Mammary epithelial cell (primary cell): ENCODE measurements at regions of chr4 and their contacts with region 1.

Region 1: GRCh38 chr4:5719350-5720055 is 8.5 kb downstream of the EVC start:
- DNase-seq: no peak
- H3K4me3 ChIP-seq: no peak overlapping the region
- H3K27ac ChIP-seq: no peak overlapping the region
- H3K4me1 ChIP-seq: no peaks in the 10 kb centered on the region
- H3K27me3 ChIP-seq: no peaks in the 10 kb centered on the region
- CTCF ChIP-seq: no peak

Region 2: GRCh38 chr4:5773271-5773555 is 53.7 kb after region 1 on chr4:
- CTCF ChIA-PET with region 1: no interaction called
- dilution Hi-C with region 1: loop called (anchors 5 kb)
- in situ Hi-C with region 1: no loop called
- intact Hi-C with region 1: loop called (anchors 5 kb)
- DNase-seq: peak; percentile 98
- H3K4me3 ChIP-seq: no peak overlapping the region
- H3K27ac ChIP-seq: peak overlapping the region; percentile 89
- H3K4me1 ChIP-seq: peaks cover 26% of the 10 kb centered on the region
- H3K27me3 ChIP-seq: no peaks in the 10 kb centered on the region
- CTCF ChIP-seq: no peak